Activated T-helper 1 cell treated with anti-CD3 and anti-CD28 coated beads, Interleukin-12 subunit alpha, Interleukin-12 subunit beta, Interleukin-2, Interleukin-4 antibody, amounts not matched to agents 30 ng/mL and 10 ng/mL and 1 ng/mL, durations not matched to agents 14 hours and 24 hours and 36 hours (primary cell): ENCODE measurements at regions of chr17 and their contacts with region 1.

Region 1: GRCh38 chr17:67475236-67475937 is 98.3 kb downstream of the PITPNC1 start:
- DNase-seq: peak; percentile 78
- H3K4me3 Mint-ChIP-seq: peak overlapping the region; percentile 70
- H3K27ac Mint-ChIP-seq: peak overlapping the region; percentile 92
- H3K4me1 Mint-ChIP-seq: peaks cover 57% of the 10 kb centered on the region
- H3K27me3 Mint-ChIP-seq: no peaks in the 10 kb centered on the region

Region 2: DNA sequence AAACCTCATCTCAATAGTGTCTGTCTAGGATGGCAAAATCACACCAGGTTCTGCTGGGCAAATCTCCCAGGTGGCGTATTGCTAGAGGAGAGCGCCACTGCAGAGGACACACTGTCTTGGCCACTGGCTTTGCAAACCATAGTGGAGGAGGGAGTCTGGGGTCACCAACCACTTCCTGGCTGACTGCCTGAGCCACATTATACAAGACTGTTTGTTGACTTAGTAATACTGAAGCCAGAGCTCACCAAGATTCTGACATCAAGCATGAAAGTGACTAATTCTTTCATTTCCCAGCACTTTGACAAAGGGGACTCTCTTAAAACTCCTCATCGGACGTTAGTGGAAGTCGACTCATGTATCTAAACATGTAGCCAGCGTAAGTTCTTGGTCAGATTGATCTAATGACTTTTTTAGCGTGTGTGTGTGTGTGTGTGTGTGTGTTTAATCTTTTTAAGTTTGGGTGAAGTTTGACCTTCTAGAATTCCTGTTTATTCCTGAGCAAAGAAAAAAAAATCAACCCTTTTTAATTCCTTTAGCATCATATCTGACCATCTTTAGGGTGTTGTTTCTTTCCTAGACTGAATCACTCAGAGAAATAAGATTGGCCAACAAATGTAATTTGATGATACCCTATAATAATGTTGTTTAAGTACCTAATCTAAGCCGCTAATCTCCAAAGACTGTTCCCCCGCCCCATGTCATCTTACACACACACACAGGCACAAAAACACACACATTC is 84.6 kb before region 1 on chr17:
- intact Hi-C with region 1: loop called (anchors 1 kb)
- DNase-seq: peak; percentile 70
- H3K4me3 Mint-ChIP-seq: peak overlapping the region; percentile 65
- H3K27ac Mint-ChIP-seq: peak overlapping the region; percentile 89
- H3K4me1 Mint-ChIP-seq: peaks cover 55% of the 10 kb centered on the region
- H3K27me3 Mint-ChIP-seq: no peaks in the 10 kb centered on the region

Region 3: DNA sequence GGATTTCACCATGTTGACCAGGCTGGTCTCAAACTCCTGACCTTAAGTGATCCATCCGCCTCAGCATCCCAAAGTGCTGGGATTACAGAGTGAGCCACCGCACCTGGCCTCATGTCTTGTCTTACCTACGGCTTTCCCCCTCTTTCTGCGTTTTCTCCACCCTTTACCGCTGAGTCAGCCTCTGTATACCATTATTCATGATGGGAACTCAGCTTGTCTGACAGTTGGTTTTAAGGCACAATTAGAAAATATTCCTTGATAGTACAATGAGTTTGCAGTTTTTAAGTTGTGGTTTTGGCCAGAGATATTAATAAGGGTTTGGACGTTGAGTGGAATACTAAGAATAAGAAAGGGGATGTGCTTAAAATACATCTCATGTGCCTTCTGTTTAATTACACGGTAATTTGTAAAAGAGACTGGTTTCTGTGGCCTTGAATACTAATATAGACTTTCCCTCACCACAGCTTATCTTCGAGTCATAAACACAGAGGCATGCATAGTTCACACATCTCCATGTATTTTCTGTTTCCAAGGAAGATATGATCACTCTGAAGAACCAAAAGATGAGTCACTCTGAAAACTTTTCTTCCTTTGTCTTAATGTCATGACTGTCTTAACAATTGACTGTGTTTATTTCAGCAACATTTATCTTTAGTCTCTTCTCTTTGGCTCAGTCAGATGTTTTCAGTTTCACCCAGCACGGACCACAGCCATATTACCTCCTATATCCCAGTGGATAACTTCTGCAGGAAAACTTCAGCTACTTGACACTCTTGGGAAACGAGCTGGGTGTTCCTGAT is 43.9 kb before region 1 on chr17:
- intact Hi-C with region 1: loop called (anchors 1 kb)
- DNase-seq: no peak
- H3K4me3 Mint-ChIP-seq: peak overlapping the region; percentile 46
- H3K27ac Mint-ChIP-seq: peak overlapping the region; percentile 85
- H3K4me1 Mint-ChIP-seq: peaks cover 51% of the 10 kb centered on the region
- H3K27me3 Mint-ChIP-seq: no peaks in the 10 kb centered on the region

Region 4: DNA sequence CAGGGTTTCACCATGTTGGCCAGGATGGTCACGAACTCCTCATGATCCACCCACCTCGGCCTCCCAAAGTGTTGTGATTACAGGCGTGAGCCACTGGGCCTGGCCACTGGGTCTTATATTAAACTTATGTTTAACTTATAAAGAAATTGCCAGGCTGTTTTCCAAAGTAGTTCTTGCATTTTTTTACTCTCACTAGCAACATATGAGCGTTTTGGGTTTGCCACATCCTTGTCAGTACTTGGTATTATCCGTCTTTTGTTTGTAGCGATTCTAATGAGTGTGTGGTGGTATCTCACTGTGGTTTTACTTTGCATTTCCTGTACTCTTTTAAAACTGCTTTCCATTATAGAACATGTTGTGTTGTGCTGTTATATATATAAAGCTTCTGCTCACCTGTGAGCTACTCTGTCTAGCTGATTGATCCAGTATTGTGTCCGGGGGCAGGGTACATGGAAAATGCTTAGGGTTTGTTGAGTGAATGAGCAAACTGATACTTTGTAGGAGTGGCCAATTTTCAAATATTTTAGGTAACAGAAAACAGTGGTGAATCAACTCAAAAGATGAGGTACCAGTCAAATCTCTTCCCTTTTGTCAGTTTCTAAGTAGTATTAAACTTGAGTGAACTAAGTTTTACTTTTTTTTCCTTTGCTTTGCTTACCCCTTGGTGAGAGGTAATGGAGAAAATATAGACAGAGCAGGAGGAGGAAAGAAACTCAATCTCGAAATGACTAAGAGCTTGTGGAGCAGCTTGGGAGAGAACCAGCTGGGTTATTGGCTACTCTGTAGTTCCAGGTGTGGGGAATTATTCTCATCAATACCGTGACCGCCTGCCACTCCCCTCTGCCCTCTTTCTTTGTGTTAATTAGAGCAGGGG is 22.5 kb before region 1 on chr17:
- intact Hi-C with region 1: loop called (anchors 1 kb)
- DNase-seq: peak; percentile 39
- H3K4me3 Mint-ChIP-seq: peak overlapping the region; percentile 48
- H3K27ac Mint-ChIP-seq: peak overlapping the region; percentile 95
- H3K4me1 Mint-ChIP-seq: peaks cover 69% of the 10 kb centered on the region
- H3K27me3 Mint-ChIP-seq: peaks cover 2% of the 10 kb centered on the region

Region 5: DNA sequence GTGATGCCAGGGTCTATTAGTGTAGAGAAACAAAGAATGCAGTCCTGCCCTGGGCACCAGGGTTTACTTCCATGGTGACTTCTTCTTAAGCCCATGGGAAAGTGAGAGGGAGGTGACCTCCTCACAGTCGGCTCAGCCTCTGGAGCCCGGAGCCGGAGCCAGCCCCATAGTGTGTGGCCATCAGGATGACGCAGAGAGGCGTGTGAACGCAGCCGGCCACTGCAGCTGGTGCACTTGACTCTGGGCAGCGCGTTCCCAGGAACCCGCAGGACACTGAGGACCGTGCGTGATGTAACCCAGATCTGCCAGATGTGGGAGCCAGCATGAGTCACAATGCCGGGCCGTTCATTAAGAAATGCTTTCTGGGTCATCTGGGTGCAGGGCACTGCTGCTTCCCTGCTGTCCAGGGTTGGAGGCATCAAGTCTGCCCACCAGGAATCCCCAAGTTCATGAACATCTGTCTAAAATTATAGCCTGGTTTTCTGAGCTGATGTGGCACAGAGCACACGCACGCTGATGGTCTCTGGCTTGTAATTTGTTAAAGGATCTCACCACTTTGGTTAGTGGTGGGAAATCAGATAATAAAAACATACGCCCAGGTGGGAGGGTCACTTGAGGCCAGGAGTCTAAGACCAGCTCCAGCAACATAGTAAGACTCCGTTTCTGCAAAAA is 15.8 kb after region 1 on chr17:
- intact Hi-C with region 1: no loop called
- DNase-seq: no peak
- H3K4me3 Mint-ChIP-seq: no peak overlapping the region
- H3K27ac Mint-ChIP-seq: no peak overlapping the region
- H3K4me1 Mint-ChIP-seq: peaks cover 17% of the 10 kb centered on the region
- H3K27me3 Mint-ChIP-seq: no peaks in the 10 kb centered on the region

Region 6: GRCh38 chr17:67689534-67690177 is 214.3 kb after region 1 on chr17:
- intact Hi-C with region 1: loop called (anchors 1 kb)
- DNase-seq: peak; percentile 31
- H3K4me3 Mint-ChIP-seq: no peak overlapping the region
- H3K27ac Mint-ChIP-seq: no peak overlapping the region
- H3K4me1 Mint-ChIP-seq: no peaks in the 10 kb centered on the region
- H3K27me3 Mint-ChIP-seq: no peaks in the 10 kb centered on the region